Aorta (tissue), 5 donors: ENCODE measurements at regions of chr16 and their contacts with region 1.

Region 1: GRCh38 chr16:6439129-6439528 is 893.5 kb upstream of the RBFOX1 start:
- DNase-seq: no peak
- ATAC-seq: no peak
- H3K4me3 ChIP-seq: no peak overlapping the region
- H3K27ac ChIP-seq: no peak overlapping the region
- H3K4me1 ChIP-seq: no peaks in the 10 kb centered on the region
- H3K27me3 ChIP-seq: no peaks in the 10 kb centered on the region

Region 2: DNA sequence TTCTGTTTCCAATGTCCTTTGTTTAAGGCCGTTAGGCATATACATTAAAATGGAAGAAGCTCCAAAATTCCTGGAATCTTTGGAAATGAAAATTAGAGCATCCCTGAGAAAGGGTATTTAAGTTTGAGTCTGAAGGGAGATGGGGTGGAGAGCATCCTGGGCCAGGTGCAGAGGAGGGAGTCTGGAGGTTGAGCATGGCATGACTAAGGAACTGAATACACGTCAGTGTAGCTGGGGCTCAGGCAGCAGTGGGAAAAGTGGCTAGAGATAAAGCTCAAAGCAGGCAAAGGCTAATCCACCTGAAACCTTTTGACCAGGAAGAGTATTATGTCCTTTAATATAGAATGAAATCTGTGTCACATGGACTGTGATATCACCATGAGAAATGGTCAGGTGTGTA is 224.5 kb after region 1 on chr16:
- intact Hi-C with region 1: loop called in 1 of 2 experiments (anchors 10 kb)
- DNase-seq: no peak
- ATAC-seq: no peak
- H3K4me3 ChIP-seq: no peak overlapping the region
- H3K27ac ChIP-seq: no peak overlapping the region
- H3K4me1 ChIP-seq: no peaks in the 10 kb centered on the region
- H3K27me3 ChIP-seq: peaks cover 0 to 3% of the 10 kb centered on the region in 2 donors